ENCODE measurements at regions of chrX and their contacts with region 1.

Region 1: GRCh38 chrX:49165901-49166881 is 3.6 kb downstream of the MAGIX start:
- DNase-seq: peak; percentile 82
- H3K4me3 Mint-ChIP-seq: peak overlapping the region; percentile 80
- H3K27ac Mint-ChIP-seq: peak overlapping the region; percentile 99
- H3K4me1 Mint-ChIP-seq: peaks cover 45% of the 10 kb centered on the region
- H3K27me3 Mint-ChIP-seq: no peaks in the 10 kb centered on the region

Region 2: DNA sequence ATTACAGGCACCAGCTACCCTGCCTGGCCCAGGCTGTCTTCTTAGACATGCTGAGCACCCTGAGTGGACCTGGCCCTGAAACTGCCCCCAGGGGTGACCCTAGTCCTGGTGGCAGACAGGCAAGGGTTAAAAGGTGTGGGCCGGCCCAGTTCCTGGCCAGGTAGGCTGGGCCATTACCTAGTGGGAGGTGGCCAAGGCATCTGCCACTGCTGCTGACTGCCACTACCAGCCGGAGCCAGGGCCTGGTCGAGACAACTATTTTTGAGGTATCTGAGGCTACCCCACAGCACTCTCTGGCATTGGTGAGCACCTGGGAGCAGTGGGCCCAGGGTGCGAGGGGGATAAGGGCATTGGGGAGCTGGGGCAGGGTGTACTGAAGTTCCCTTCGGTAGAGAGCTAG is 107.4 kb before region 1 on chrX and contains the start of gene CCDC120:
- CTCF ChIA-PET with region 1: no interaction called
- POLR2A ChIA-PET with region 1: no interaction called
- DNase-seq: no peak
- H3K4me3 Mint-ChIP-seq: no peak within 1 kb of the TSS
- H3K27ac Mint-ChIP-seq: no peak within 1 kb of the TSS
- H3K4me1 Mint-ChIP-seq: peaks cover 19% of the 10 kb centered on the region
- H3K27me3 Mint-ChIP-seq: no peaks in the 10 kb centered on the region
- total RNA-seq, gene CCDC120: 5.8 to 6.5 TPM

Region 3: DNA sequence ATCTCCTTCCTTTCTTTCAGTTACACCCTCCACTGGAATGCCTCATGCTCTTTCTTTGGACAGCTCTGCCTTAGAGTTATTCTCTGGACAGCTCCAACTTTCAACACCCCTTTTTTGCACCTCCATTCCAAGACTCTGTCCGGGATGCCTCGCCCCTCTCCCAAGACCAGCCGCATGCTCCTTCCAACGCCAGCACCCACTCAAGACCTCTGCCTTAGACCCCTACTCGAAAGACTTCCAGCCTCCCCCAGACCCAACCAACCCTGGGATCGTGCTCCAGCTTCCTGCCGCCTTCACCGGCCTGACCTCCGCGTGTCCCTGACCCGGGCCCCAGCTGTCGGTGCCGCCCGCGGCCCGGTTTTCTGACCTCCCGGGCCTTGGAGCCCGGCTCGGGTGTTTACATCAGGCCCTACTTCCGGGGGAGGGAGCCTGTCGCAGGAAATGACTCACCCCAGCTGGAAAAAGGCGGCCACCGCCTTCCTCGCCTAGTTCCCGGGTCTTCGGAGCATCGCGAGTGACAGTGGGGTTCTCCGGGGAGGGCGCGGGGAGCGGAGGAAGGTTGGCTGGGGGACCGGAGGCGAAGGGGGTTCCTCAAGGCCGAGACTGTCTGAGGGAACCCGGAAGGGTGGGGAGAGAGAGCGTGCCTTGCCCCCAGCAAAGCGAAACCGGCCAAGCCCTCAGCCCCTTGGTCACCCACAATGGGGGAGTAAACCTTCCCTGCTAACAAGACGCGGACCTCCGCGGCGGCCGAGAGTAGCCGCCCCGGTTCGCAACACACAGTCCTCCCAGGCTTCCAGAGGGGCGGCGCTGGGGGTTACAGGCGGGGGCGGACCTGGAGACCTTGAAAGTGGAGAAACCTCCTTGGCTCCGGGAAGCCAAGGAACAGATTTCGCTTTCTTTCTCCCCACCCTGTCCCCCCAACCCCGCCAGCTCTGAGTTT is 86.4 kb before region 1 on chrX and contains the start of gene WDR45:
- CTCF ChIA-PET with region 1: no interaction called
- POLR2A ChIA-PET with region 1: interaction called, 18 read pairs
- DNase-seq: peak; percentile 81
- H3K4me3 Mint-ChIP-seq: peak within 1 kb of the TSS; percentile 94
- H3K27ac Mint-ChIP-seq: peak within 1 kb of the TSS; percentile 94
- H3K4me1 Mint-ChIP-seq: peaks cover 20% of the 10 kb centered on the region
- H3K27me3 Mint-ChIP-seq: no peaks in the 10 kb centered on the region
- total RNA-seq, gene WDR45: 51.1 to 58.7 TPM

Region 4: DNA sequence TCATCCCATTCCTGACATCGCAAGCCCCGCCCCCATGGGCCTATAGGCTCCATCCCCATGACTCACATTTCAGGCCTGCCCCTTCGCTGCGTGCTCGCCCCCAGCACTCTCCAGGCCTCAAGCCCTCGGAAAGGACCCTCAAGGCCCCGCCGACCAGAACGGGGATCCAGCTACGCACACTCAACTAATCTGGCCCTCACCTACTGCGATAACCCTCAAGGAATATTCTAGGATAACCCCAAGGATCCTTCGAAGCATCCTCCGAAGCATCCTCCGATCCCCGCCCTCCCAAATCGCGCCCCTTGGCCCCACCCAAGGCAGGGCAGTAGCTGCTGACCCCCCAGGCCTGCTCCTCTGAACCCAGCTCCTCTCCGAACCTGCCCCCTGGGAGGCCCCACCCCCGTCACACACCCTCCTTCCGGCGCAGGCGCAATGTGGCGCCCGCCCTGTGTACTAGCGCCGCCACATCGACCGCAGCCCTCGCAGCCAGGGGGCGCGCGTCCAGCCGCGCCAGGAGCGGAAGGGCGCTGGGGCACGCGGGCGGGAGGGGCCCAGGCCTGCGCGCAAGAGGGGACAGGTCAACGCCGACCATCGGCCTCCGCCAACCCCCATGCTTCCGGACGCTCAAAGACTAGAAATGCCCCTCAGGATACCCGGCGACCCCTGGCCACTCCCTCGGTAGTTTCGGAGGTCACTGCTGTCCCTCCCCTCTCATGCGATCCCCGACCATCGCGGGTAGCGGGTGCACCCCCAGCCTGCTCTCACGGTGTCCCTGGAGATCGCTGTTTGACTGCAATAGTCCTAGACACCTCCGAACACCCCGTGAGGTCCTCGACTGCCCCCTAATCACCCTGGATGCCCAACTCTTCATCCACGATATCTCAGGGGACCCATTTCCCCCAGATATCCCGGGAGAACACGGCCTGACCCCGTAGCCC is 10.0 kb before region 1 on chrX:
- CTCF ChIA-PET with region 1: interaction called, 18 read pairs
- POLR2A ChIA-PET with region 1: interaction called, 6 read pairs
- DNase-seq: peak; percentile 87
- H3K4me3 Mint-ChIP-seq: peak overlapping the region; percentile 89
- H3K27ac Mint-ChIP-seq: peak overlapping the region; percentile 94
- H3K4me1 Mint-ChIP-seq: peaks cover 18% of the 10 kb centered on the region
- H3K27me3 Mint-ChIP-seq: no peaks in the 10 kb centered on the region

Region 5: GRCh38 chrX:49209434-49210251 is 43.5 kb after region 1 on chrX:
- CTCF ChIA-PET with region 1: no interaction called
- POLR2A ChIA-PET with region 1: no interaction called
- DNase-seq: no peak
- H3K4me3 Mint-ChIP-seq: no peak overlapping the region
- H3K27ac Mint-ChIP-seq: no peak overlapping the region
- H3K4me1 Mint-ChIP-seq: no peaks in the 10 kb centered on the region
- H3K27me3 Mint-ChIP-seq: peaks cover 2% of the 10 kb centered on the region

Region 6: GRCh38 chrX:49269010-49269767 is 103.0 kb after region 1 on chrX:
- CTCF ChIA-PET with region 1: no interaction called
- POLR2A ChIA-PET with region 1: interaction called, 11 read pairs
- DNase-seq: peak; percentile 94
- H3K4me3 Mint-ChIP-seq: peak overlapping the region; percentile 81
- H3K27ac Mint-ChIP-seq: peak overlapping the region; percentile 91
- H3K4me1 Mint-ChIP-seq: peaks cover 61% of the 10 kb centered on the region
- H3K27me3 Mint-ChIP-seq: no peaks in the 10 kb centered on the region

Region 7: GRCh38 chrX:49291615-49292337 is 125.6 kb after region 1 on chrX:
- CTCF ChIA-PET with region 1: no interaction called
- POLR2A ChIA-PET with region 1: no interaction called
- DNase-seq: peak; percentile 65
- H3K4me3 Mint-ChIP-seq: no peak overlapping the region
- H3K27ac Mint-ChIP-seq: no peak overlapping the region
- H3K4me1 Mint-ChIP-seq: peaks cover 25% of the 10 kb centered on the region
- H3K27me3 Mint-ChIP-seq: peaks cover 1% of the 10 kb centered on the region

Region 8: DNA sequence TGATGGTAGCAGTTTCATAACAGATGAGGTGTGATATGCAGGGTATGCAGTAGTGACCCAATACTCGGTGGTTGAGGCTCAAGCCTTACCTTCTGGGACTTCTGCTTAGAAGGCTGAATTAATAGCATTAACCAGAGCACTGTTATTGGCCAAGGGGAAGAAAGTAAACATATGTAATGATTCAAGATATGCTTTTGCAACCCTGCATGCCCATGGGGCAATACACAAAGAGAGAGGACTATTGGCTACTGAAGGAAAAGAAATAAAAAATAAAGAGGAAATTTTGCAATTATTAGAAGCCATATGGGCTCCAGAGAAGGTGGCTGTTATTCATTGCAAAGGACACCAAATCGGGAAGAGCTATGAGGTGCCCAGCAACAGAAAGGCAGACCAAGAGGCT is 146.0 kb after region 1 on chrX:
- CTCF ChIA-PET with region 1: no interaction called
- POLR2A ChIA-PET with region 1: no interaction called
- DNase-seq: no peak
- H3K4me3 Mint-ChIP-seq: no peak overlapping the region
- H3K27ac Mint-ChIP-seq: no peak overlapping the region
- H3K4me1 Mint-ChIP-seq: peaks cover 16% of the 10 kb centered on the region
- H3K27me3 Mint-ChIP-seq: peaks cover 32% of the 10 kb centered on the region

Measured in activated CD4-positive, alpha-beta memory T cell treated with anti-CD3 and anti-CD28 coated beads, Interleukin-2, amount 10 ng/mL, durations not matched to agents 7 days and 5 days (primary cell).